Endothelial cell of umbilical vein (primary cell): ENCODE measurements at regions of chr2 and their contacts with region 1.

Region 1: DNA sequence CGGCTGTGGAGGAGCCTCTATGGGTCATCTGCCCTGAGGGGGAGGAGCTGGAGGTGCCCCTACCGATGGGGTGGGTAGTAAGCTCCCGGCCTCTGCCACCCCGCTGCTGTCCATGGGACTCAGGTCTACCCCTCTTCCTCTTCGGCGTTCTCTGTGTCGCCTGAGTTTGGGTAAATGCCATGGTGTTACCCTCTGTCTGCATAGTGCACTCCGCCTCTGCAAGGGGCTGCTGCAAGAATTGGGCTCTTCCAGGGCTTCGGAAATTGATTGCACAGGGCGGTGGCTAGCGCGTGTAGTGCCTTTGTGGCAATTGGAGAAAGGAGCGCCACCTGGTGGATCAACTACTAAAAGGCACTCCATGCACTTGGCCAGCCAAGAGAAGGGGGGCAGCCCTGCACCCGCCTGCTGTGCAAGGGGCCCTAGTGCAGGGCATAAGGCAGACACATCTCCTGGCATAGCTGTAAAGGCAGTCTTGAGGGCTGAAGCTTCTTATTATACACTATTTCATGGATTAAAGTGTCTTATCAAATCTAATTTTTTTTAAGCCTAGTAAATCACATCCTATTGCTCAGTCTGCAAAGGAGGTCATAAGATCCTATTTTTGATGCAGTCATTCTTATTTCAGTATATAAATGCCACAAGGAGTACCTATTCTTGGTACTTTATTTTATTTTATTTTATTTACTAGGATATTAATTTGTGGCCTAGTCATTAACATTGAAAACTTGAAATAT is 308.9 kb downstream of the PDE11A start:
- DNase-seq: peak; percentile 70
- H3K4me3 ChIP-seq: no peak overlapping the region
- H3K27ac ChIP-seq: no peak overlapping the region
- H3K4me1 ChIP-seq: peaks cover under 1% of the 10 kb centered on the region
- H3K27me3 ChIP-seq: no peaks in the 10 kb centered on the region
- CTCF ChIP-seq: peak; percentile 82 to 90
- POLR2A ChIP-seq: no peak

Region 2: DNA sequence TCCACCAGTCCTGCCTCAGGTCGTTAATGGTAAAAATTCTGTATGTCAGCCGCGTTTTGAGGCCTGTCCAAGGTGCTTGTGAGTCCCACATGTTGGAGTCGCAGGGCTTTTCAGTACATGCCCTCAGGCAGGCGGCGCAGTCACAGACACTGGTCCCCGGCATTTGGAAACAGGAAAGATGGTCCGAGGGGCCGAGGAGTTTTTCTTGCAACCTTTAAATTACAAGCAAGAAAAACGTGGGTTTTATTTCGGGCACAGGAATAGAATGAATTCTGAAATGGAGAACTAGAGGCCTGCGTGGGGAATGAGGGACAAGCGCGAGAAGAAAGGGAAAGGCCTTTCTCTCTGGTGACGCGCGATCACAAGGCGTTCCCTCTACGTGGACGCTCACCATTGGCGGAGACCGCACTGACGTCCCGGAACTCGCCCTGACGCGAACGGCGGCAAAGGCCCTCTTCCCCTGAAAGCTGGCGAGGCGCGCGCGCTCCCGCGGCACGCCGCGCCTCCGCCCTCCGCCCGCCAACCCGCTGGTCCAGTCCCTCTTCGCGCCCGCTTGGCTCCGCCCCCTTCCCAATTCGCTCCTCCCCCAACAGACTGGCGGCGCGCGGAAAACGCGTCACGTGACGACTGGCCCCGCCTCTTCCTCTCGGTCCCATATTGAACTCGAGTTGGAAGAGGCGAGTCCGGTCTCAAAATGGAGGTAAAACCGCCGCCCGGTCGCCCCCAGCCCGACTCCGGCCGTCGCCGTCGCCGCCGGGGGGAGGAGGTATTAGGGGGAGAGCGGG is 551.4 kb before region 1 on chr2 and contains the start of gene HNRNPA3:
- CTCF ChIA-PET with region 1: no interaction called
- POLR2A ChIA-PET with region 1: no interaction called
- dilution Hi-C with region 1: no loop called
- intact Hi-C with region 1: loop called (anchors 5 kb)
- DNase-seq: peak; percentile 100
- H3K4me3 ChIP-seq: peak within 1 kb of the TSS; percentile 99 to 100 (median 100)
- H3K27ac ChIP-seq: peak within 1 kb of the TSS; percentile 100
- H3K4me1 ChIP-seq: peaks cover 33% of the 10 kb centered on the region
- H3K27me3 ChIP-seq: no peaks in the 10 kb centered on the region
- CTCF ChIP-seq: peak in 1 of 2 donors; percentile 2
- POLR2A ChIP-seq: peak; percentile 97
- total RNA-seq, gene HNRNPA3: 316 and 322 TPM in 2 replicates

Region 3: DNA sequence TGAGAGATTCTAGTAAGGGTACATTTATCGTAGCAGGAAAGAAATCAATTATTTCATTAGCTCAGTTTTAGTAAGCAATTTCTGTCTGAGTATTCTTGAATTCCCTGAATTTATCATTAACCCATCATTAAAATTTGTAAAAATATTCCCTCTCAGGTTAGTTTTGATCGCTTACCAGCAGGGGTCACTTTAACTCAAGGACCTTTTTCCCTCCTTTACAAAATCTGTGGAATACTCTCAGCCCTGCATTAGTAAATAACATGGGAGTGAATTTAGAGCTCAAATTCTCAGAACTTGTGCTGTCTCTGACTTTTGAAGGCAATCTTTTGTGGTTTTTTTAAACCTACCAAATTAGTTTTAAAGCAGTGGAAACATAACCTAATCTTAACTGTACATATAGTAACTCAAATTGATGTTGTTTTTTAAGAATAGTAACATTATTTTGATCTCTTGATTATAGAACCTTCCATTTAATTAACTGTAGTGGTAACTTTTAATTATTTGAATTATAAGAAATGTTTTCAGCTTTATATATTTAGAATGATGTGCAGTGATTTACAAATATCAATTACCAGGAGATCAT is 273.9 kb before region 1 on chr2:
- CTCF ChIA-PET with region 1: interaction called, 22 read pairs
- POLR2A ChIA-PET with region 1: no interaction called
- dilution Hi-C with region 1: no loop called
- intact Hi-C with region 1: loop called (anchors 1 kb)
- DNase-seq: peak; percentile 55
- H3K4me3 ChIP-seq: no peak overlapping the region
- H3K27ac ChIP-seq: no peak overlapping the region
- H3K4me1 ChIP-seq: no peaks in the 10 kb centered on the region
- H3K27me3 ChIP-seq: no peaks in the 10 kb centered on the region
- CTCF ChIP-seq: peak; percentile 42 to 45
- POLR2A ChIP-seq: no peak

Region 4: DNA sequence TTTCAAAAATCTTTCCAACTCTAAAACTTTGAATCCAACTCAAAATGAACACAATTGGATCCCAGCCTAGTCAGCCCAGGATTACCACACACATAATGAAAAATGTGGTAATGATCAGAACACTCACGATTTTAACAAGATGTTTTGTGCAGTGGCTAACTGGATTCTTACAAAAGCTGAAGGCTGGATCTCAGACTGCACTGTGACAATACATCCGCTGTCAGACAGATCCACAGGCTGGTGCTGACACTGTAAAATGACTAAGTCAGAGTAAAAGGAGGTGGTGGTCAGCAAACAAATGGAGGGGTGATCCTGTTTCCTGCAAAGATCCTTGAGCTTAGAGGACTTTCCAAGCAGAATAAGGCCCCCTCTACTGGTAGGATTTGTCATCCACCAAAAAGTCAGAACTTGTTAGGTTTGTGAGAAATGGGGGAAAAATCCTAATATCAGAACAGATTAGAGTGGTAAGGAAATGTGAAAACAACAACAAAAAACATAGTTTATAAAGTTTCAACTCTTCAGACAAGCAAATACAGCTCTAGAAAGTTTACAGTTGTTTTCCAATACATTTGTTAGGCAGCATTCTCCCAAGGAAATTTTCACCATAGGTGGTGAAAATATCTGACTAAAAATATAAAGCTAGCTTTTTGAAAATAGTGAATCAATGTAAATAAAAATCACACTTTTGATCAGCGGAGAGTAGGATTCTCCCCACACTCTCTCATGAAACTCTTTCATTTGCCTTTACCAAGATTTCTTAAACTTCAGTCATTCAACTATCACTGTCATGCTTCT is 159.2 kb before region 1 on chr2:
- CTCF ChIA-PET with region 1: interaction called, 5 read pairs
- POLR2A ChIA-PET with region 1: no interaction called
- dilution Hi-C with region 1: no loop called
- intact Hi-C with region 1: loop called (anchors 2 kb)
- DNase-seq: peak; percentile 71
- H3K4me3 ChIP-seq: no peak overlapping the region
- H3K27ac ChIP-seq: no peak overlapping the region
- H3K4me1 ChIP-seq: no peaks in the 10 kb centered on the region
- H3K27me3 ChIP-seq: no peaks in the 10 kb centered on the region
- CTCF ChIP-seq: peak; percentile 56 to 70
- POLR2A ChIP-seq: no peak

Region 5: GRCh38 chr2:177717831-177718618 is 45.7 kb before region 1 on chr2:
- CTCF ChIA-PET with region 1: interaction called, 9 read pairs
- POLR2A ChIA-PET with region 1: no interaction called
- dilution Hi-C with region 1: no loop called
- intact Hi-C with region 1: loop called (anchors 1 kb)
- DNase-seq: peak; percentile 38
- H3K4me3 ChIP-seq: no peak overlapping the region
- H3K27ac ChIP-seq: no peak overlapping the region
- H3K4me1 ChIP-seq: no peaks in the 10 kb centered on the region
- H3K27me3 ChIP-seq: no peaks in the 10 kb centered on the region
- CTCF ChIP-seq: no peak
- POLR2A ChIP-seq: no peak